ENCODE measurements at regions of chr11 and their contacts with region 1.

Region 1: DNA sequence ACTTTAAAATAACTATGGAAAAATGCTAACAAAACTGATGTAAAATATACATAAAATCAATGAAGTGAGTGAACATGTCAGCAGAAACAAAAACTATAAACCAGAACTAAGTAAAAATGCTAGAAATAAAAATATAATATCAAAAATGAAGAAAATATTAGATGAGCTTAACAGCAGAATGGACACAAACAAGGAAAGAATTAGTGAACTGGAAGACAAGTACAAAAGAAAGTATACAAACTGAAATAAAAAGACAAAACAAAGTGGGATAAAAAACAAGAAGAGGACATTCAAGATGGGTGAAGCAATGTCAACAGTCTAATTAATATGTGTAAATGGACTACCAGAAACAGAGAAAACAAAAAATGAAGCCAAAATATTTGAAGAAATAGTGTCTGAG is 339.2 kb downstream of the NXPE2 start:
- DNase-seq: no peak
- H3K4me3 ChIP-seq: no peak overlapping the region
- CTCF ChIP-seq: no peak

Region 2: DNA sequence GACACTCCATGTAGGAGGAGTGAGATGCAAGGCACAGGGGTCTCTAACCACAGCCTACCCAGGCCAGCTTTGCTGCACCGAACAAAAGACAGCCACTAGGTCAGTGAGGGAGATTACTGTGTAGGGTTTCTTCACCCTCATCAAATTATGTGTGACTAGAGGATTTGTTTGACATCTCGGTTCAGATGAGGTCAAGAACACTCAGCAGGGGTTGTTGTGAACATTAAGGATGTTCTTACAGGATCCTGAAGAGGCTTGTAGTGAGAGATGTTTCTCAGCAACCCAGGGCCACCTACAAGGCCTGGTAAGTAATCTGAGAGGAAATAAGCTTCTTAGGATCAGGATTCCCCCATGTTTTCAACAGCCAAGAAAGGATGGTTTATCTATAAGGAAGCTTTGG is 137.1 kb before region 1 on chr11:
- in situ Hi-C with region 1: no loop called
- DNase-seq: no peak
- H3K4me3 ChIP-seq: no peak overlapping the region
- CTCF ChIP-seq: no peak

Region 3: DNA sequence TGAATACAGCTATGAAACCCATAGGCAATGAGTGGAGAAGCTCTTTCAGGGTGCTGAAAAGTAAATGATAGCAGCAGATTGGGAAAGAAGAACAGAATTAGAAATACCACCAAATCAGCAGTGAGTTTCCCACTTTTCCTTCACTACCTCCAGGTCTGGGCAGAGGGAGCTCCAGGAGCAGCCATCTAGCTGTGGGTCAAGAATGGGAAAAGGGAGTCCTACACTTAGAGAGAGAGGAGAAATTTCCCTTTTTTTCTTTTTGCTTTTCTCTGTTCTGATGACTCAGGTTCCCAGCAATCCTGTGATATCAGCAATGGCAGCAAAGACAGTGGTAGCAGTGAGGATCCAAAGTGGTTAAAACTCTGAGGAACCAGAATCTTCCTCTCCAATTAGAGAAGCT is 75.3 kb before region 1 on chr11:
- in situ Hi-C with region 1: no loop called
- DNase-seq: no peak
- H3K4me3 ChIP-seq: no peak overlapping the region
- CTCF ChIP-seq: peak; percentile 23

Region 4: GRCh38 chr11:114977651-114978050 is 39.9 kb before region 1 on chr11:
- in situ Hi-C with region 1: loop called (anchors 5 kb)
- DNase-seq: no peak
- H3K4me3 ChIP-seq: no peak overlapping the region
- CTCF ChIP-seq: no peak

Region 5: DNA sequence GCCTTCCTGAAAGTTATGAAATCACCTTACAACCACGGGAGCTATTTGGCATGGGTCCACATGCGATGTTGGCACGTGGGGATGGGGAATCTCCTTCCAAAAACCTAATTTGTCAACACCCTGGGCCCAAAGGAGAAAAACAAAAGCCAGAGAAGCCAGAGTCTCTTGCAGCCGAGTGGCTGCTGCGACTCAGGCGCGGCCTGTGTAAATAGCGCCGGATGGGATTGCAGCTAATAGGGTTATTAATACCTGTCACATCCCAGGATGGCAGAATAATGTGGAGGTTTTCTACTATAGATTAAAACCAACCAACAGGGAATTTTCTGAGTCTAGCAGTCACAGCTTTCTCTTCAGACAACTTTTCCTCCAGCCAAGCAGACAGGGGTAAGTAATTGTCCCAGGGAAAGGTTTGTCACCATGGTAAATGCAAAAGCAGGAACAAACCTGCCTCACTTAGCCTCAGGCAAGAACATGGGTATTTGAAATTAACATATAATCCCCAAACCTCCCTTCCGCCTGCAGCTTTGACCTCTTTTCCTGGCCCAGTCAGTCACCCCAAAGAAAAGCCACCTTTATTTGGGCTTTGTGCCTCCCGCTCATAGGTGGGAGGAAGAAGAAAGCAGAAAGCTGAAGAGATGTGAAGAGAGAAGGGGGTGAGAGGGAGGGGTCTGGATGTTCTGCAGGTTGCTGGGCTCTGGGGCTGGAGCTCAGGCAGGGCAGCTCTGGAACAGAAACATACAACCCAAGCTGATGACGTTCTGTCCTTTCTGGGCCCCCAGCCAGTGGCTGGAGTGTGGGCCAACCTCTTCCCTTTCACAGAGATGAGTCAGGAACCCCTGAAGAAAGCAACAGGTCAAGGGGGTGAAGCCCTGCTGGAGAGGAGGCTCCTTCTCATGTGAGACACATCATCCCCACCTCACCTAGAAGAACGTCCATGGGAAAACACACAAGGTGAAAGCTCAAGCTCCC is 37.3 kb after region 1 on chr11:
- in situ Hi-C with region 1: no loop called
- DNase-seq: peak; percentile 48
- H3K4me3 ChIP-seq: no peak overlapping the region
- CTCF ChIP-seq: no peak

Region 6: GRCh38 chr11:115085461-115086210 is 68.1 kb after region 1 on chr11:
- in situ Hi-C with region 1: no loop called
- DNase-seq: peak; percentile 27
- H3K4me3 ChIP-seq: no peak overlapping the region
- CTCF ChIP-seq: no peak